ENCODE measurements at regions of chr9 and their contacts with region 1.

Region 1: DNA sequence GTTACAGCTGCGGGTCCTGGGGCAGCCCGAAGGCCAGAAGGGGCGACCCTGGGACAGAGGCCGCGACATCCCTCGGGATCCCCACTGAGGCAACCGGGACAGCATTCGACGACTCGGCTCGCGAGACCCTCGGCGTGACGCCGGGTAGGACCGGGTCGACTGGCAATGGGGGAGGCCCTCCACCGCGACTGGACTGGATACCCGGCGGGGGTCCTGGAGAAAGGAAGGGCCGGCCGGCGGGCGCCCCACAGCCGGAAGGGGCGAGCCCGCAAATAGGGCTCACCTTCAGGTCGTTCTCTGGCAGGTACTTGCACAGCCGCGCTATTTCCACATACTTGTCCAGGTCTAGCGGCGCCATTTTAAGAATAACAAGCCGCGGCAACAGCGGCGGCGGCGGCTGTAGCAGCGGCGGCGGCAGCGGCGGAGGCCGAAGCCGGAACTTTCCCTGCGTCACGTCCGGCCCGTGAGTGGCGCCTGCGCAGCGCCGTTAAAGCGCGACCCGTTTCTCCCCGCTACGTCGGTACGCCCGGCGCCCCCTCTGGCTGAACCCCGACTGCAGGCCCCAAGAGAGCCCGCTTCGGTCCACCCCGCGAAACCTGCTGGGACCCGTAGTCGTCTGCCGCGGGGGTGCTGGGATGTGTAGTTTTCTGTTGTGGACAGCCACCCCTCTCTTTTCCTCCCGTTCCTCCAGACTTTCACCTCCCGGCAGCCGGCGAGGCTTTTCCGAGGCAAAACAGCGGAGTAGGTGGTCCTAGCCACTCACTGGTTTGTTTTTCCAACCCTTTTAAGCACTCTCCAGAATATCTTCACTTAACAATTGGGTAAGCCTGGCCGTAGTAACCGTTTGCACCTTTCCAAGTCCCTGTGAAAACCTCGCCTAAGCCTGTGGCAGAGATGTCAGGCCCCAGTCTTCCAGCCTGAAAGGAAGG is at the start of gene PPP6C:
- DNase-seq: peak; percentile 87 to 97
- H3K4me3 ChIP-seq: peak within 1 kb of the TSS; percentile 95 to 99 (median 96)
- H3K27ac ChIP-seq: peak within 1 kb of the TSS; percentile 80
- H3K4me1 ChIP-seq: peaks cover 0 to 3% (median 1%) of the 10 kb centered on the region in 4 experiments; a peak in 1 of 7 replicates
- H3K27me3 ChIP-seq: no peaks in the 10 kb centered on the region
- CTCF ChIP-seq: peak; percentile 52 to 80 (median 78)
- EP300 ChIP-seq: 0 out of 3 replicates have a peak, but pooled peaks of 1 of the 2 experiments have one; percentile 34
- POLR2A ChIP-seq: peak; percentile 75 to 87
- RAD21 ChIP-seq: no peak; a peak in 1 of 4 replicates
- total RNA-seq, gene PPP6C: 50.0 and 52.3 TPM in 2 replicates

Region 2: DNA sequence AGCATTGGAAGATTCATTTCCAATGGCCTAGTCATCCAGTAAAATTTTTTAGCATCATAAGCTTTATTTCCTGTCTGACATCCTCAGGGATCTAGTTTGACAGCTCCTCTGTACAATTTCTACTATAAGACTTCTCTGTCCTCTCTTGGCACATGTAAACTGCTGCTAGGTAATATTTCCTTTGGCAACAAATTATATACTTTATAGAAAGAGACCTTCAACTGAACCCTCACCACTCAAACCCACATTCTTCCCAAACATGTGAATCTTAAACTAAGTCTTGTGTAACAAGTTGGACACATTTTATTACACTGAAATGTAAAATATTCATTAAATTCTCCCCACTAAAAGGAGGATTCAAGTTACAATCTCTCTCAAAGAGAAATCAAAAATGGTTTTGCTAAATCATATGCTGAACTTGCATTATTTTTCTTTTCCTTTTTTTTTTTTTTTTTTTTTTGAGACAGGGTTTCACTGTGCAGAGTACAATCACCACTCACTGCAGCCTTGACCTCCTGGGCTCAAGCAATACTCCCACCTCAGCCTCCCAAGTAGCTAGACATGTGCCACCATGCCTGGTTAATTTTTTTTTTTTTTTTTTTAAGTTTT is 83.2 kb before region 1 on chr9:
- CTCF ChIA-PET with region 1: no interaction called
- POLR2A ChIA-PET with region 1: no interaction called
- DNase-seq: no peak
- H3K4me3 ChIP-seq: no peak overlapping the region
- H3K27ac ChIP-seq: no peak overlapping the region
- H3K4me1 ChIP-seq: no peaks in the 10 kb centered on the region
- H3K27me3 ChIP-seq: no peaks in the 10 kb centered on the region
- CTCF ChIP-seq: no peak
- EP300 ChIP-seq: no peak
- POLR2A ChIP-seq: no peak
- RAD21 ChIP-seq: no peak

Region 3: DNA sequence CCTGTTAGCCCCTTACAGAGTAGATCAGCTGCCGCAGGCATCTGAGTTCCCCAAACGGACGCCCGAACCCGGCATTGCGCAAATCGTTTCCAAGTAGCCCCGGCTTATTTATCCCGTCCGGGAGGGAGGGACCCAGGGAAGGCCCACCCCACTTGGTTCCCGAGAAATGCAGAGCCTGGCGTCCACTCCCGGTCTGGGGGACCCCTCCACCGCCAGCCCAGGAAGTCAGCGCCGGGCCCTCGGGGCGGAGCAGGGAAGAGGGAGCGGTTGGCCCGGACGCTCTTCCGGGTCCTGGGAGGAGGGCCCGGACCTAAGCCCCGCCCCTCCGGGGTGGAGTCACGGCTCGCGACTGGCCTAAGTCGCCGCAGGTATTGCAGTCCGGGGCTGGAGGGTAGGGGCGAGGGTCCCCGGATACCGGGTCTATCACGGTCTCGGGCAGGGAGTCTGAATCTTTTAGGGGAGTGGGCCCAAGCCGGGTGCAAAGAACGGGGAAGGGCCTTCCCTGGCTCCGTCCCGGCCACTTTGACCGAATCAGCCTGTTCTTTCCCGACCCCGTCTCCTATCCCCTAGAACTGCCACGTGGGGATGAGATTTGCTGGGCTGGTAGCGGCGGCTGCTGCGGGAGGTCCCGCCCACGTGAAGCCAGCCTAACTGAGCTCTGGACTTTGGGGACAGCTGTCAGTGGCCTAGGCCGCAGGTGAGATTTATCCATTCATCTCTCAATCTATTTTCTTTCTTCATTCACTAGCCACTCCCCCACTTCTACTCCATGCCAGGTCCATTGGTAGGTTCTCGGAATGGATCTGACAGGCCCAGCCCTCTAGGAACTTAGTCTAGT is 10.8 kb after region 1 on chr9 and contains the start of gene RABEPK:
- CTCF ChIA-PET with region 1: interaction called, 3 read pairs
- POLR2A ChIA-PET with region 1: interaction called, 10 read pairs
- DNase-seq: peak; percentile 90 to 98
- H3K4me3 ChIP-seq: peak within 1 kb of the TSS; percentile 59 to 88 (median 80)
- H3K27ac ChIP-seq: no peak within 1 kb of the TSS
- H3K4me1 ChIP-seq: peaks cover 0 to 3% (median 0%) of the 10 kb centered on the region in 4 experiments; a peak in 2 of 7 replicates
- H3K27me3 ChIP-seq: no peaks in the 10 kb centered on the region
- CTCF ChIP-seq: no peak
- EP300 ChIP-seq: no peak
- POLR2A ChIP-seq: peak; percentile 72 to 91
- RAD21 ChIP-seq: no peak
- total RNA-seq, gene RABEPK: 32.6 and 34.3 TPM in 2 replicates

Measured in H1 (cell line).